ENCODE measurements at regions of chr20 and their contacts with region 1.

Region 1: DNA sequence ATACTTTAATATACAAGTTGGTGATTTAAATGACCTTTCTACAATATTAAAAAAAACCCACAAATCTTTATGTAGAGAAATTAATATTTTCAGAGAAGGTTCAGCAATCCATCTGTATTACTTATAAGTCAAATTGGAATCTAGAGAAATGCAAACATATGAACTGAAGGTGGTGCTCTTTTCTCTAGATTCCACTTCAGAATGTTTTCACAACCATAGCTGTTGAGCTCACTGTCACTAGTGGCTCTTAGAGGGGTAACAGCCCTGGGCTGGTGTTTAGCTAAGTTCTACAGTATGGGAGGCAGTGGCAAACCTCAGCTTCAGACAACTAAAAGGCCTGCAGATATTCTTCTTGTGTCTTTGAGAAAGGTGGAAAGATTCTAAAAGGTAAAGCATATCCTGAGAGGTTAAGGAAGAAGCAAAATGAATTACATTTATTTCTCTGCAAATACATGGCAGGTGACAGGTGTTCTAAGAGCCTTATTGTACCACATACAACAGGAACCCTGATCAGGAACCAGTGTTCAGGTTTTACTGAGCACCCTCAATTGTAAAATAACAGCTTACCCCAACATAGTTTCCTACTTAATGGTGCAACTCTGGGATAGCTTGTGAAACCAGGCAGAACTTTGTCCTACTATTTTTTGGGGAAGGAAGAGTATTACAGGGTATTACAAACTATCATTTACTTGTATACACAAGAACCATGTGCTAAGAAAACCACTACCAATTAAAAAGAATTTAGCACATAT is 56.6 kb upstream of the SAMHD1 start:
- DNase-seq: peak in 11 of 14 experiments; percentile 11 to 79 (median 32)
- ATAC-seq: peak; percentile 100
- H3K4me3 ChIP-seq: no peak overlapping the region
- H3K4me3 Mint-ChIP-seq: peak overlapping the region; percentile 47
- H3K27ac ChIP-seq: peak overlapping the region in 1 of 2 donors; percentile 14
- H3K27ac Mint-ChIP-seq: peak overlapping the region; percentile 84
- H3K4me1 ChIP-seq: peaks cover 13% of the 10 kb centered on the region
- H3K4me1 Mint-ChIP-seq: peaks cover 26% of the 10 kb centered on the region
- H3K27me3 ChIP-seq: no peaks in the 10 kb centered on the region
- H3K27me3 Mint-ChIP-seq: no peaks in the 10 kb centered on the region
- CTCF ChIP-seq: peak; percentile 83

Region 2: GRCh38 chr20:37020636-37021035 is 12.6 kb after region 1 on chr20:
- CTCF ChIA-PET with region 1: interaction called, 13 read pairs
- POLR2A ChIA-PET with region 1: interaction called, 7 read pairs
- intact Hi-C with region 1: no loop called
- DNase-seq: no peak
- ATAC-seq: no peak
- H3K4me3 ChIP-seq: no peak overlapping the region
- H3K4me3 Mint-ChIP-seq: no peak overlapping the region
- H3K27ac ChIP-seq: no peak overlapping the region
- H3K27ac Mint-ChIP-seq: no peak overlapping the region
- H3K4me1 ChIP-seq: peaks cover 15% of the 10 kb centered on the region
- H3K4me1 Mint-ChIP-seq: peaks cover 37% of the 10 kb centered on the region
- H3K27me3 ChIP-seq: no peaks in the 10 kb centered on the region
- H3K27me3 Mint-ChIP-seq: no peaks in the 10 kb centered on the region
- CTCF ChIP-seq: no peak

Region 3: DNA sequence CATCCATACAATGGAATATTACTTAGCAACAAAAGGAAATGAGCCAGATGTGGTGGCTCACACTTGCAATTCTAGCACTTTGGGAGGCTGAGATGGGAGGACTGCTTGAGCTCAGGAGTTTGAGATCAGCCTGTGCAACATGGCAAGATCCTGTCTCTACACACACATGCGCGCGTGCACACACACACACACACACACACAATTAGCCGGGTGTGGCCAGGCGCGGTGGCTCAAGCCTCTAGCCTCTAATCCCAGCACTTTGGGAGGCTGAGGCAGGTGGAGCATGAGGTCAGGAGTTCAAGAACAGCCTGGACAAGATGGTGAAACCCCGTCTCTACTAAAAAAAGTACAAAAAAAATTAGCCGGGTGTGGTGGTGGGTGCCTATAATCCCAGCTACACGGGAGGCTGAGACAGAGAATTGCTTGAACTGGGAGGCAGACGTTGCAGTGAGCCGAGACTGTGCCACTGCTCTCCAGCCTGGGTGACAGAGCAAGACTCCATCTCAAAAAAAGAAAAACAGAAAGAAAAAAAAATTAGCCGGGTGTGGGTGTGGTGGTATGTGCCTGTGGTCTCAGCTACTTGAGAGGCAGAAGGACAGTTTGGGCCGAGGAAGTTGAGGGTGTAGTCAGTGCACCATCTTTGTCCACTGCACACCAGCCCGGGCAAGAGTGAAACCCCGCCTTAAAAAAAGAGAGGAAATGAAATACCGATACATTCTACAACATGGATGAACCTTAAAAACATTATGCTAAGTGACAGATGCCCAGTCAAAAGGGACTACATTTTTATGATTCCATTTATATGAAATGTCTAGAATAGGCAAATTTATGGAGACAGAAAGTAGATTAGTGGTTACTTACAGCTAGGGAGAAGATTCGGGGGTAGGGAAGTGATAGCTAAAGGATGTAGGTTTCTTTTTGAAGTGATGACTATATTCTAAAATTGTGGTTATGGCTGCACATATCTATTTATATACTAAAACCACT is 35.2 kb after region 1 on chr20:
- CTCF ChIA-PET with region 1: no interaction called
- POLR2A ChIA-PET with region 1: interaction called, 15 read pairs
- intact Hi-C with region 1: loop called in 1 of 2 experiments (anchors 1 kb)
- DNase-seq: peak in 9 of 14 experiments; percentile 2 to 79 (median 7)
- ATAC-seq: peak; percentile 79
- H3K4me3 ChIP-seq: peak overlapping the region; percentile 56
- H3K4me3 Mint-ChIP-seq: peak overlapping the region; percentile 88
- H3K27ac ChIP-seq: peak overlapping the region; percentile 43 to 68
- H3K27ac Mint-ChIP-seq: peak overlapping the region; percentile 80
- H3K4me1 ChIP-seq: peaks cover 21% of the 10 kb centered on the region
- H3K4me1 Mint-ChIP-seq: peaks cover 25% of the 10 kb centered on the region
- H3K27me3 ChIP-seq: no peaks in the 10 kb centered on the region
- H3K27me3 Mint-ChIP-seq: no peaks in the 10 kb centered on the region
- CTCF ChIP-seq: no peak

Region 4: GRCh38 chr20:37081717-37082289 is 73.7 kb after region 1 on chr20:
- CTCF ChIA-PET with region 1: interaction called, 12 read pairs
- POLR2A ChIA-PET with region 1: interaction called, 11 read pairs
- intact Hi-C with region 1: loop called (anchors 1 kb)
- DNase-seq: peak; percentile 37 to 77 (median 54)
- ATAC-seq: peak; percentile 86
- H3K4me3 ChIP-seq: no peak overlapping the region
- H3K4me3 Mint-ChIP-seq: no peak overlapping the region
- H3K27ac ChIP-seq: peak overlapping the region in 1 of 2 donors; percentile 16
- H3K27ac Mint-ChIP-seq: peak overlapping the region; percentile 48
- H3K4me1 ChIP-seq: peaks cover 10% of the 10 kb centered on the region
- H3K4me1 Mint-ChIP-seq: peaks cover 25% of the 10 kb centered on the region
- H3K27me3 ChIP-seq: no peaks in the 10 kb centered on the region
- H3K27me3 Mint-ChIP-seq: no peaks in the 10 kb centered on the region
- CTCF ChIP-seq: peak; percentile 88

Region 5: DNA sequence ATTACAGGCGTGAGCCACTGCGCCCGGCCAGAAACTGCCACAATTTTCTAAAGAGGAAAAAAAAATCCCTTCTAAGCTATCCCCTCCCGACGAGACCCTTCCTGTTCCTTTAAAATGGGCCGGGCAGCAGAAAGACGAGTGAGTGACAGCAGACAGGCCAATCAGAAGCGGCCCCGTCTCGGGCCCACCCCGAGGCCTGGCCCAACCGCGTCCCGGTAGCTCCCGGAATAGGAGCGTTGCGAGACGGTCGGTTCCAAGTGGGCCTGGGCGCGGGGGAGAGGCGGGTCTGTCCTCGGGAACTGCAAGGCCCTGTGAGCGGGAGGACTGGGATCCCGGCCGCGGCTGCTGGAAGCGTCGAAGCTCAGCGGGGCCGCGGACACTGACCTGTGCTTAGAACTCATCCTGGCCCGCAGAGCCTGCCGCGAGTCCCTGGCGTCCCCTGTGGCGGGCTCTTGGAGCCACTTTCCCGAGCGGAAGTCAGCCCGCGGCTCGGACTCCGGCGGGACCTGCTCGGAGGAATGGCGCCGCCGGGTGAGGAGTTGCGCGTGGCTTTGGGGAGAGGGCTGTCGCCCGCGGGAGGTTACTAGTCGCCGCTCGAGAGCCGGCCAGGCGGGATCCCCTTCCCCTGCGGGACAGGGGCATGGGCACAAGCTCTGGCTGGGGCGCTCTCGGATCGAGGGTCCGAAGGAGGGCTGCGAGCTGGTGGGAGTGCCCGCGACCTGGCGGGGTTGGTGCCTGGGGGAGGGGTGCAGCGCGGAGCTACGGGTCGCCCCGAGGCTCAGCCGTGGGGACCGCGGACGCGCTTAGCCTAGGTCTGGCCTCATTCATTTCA is 171.0 kb after region 1 on chr20 and contains the starts of genes MROH8 and RPN2:
- CTCF ChIA-PET with region 1: no interaction called
- POLR2A ChIA-PET with region 1: interaction called, 6 read pairs
- intact Hi-C with region 1: loop called (anchors 5 kb)
- DNase-seq: peak; percentile 87 to 96 (median 93)
- ATAC-seq: peak; percentile 92
- H3K4me3 ChIP-seq: peak within 1 kb of the TSS; percentile 80
- H3K4me3 Mint-ChIP-seq: peak within 1 kb of the TSS; percentile 99
- H3K27ac ChIP-seq: peak within 1 kb of the TSS; percentile 84 to 90
- H3K27ac Mint-ChIP-seq: peak within 1 kb of the TSS; percentile 88
- H3K4me1 ChIP-seq: peaks cover 40% of the 10 kb centered on the region
- H3K4me1 Mint-ChIP-seq: peaks cover 46% of the 10 kb centered on the region
- H3K27me3 ChIP-seq: no peaks in the 10 kb centered on the region
- H3K27me3 Mint-ChIP-seq: no peaks in the 10 kb centered on the region
- CTCF ChIP-seq: no peak
- total RNA-seq, gene MROH8: 1.1 to 1.2 TPM
- total RNA-seq, gene RPN2: 62.8 to 65.8 TPM

Measured in CD4-positive, alpha-beta T cell (primary cell).